Transverse colon (tissue), 4 donors: ENCODE measurements at regions of chr7 and their contacts with region 1.

Region 1: GRCh38 chr7:107743567-107744344 is at the start of gene CBLL1:
- DNase-seq: peak; percentile 97
- H3K4me3 ChIP-seq: peak within 1 kb of the TSS; percentile 59 to 84 (median 73)
- H3K27ac ChIP-seq: peak within 1 kb of the TSS; percentile 93 to 96 (median 94)
- H3K4me1 ChIP-seq: peaks cover 19 to 49% (median 30%) of the 10 kb centered on the region in 4 donors
- H3K27me3 ChIP-seq: no peaks in the 10 kb centered on the region
- CTCF ChIP-seq: peak; percentile 65 to 83 (median 71)
- EP300 ChIP-seq: no peak
- POLR2A ChIP-seq: peak; percentile 68
- total RNA-seq, gene CBLL1: 30.6 to 53.9 (median 38.8) TPM

Region 2: GRCh38 chr7:107180378-107180777 is 563.4 kb before region 1 on chr7:
- in situ Hi-C with region 1: loop called in 1 of 4 experiments (anchors 25 kb)
- intact Hi-C with region 1: no loop called
- DNase-seq: peak; percentile 56
- H3K4me3 ChIP-seq: no peak overlapping the region
- H3K27ac ChIP-seq: peak overlapping the region; percentile 5 to 48 (median 36)
- H3K4me1 ChIP-seq: peaks cover 12 to 38% (median 23%) of the 10 kb centered on the region in 4 donors
- H3K27me3 ChIP-seq: no peaks in the 10 kb centered on the region
- CTCF ChIP-seq: no peak
- EP300 ChIP-seq: no peak
- POLR2A ChIP-seq: no peak

Region 3: DNA sequence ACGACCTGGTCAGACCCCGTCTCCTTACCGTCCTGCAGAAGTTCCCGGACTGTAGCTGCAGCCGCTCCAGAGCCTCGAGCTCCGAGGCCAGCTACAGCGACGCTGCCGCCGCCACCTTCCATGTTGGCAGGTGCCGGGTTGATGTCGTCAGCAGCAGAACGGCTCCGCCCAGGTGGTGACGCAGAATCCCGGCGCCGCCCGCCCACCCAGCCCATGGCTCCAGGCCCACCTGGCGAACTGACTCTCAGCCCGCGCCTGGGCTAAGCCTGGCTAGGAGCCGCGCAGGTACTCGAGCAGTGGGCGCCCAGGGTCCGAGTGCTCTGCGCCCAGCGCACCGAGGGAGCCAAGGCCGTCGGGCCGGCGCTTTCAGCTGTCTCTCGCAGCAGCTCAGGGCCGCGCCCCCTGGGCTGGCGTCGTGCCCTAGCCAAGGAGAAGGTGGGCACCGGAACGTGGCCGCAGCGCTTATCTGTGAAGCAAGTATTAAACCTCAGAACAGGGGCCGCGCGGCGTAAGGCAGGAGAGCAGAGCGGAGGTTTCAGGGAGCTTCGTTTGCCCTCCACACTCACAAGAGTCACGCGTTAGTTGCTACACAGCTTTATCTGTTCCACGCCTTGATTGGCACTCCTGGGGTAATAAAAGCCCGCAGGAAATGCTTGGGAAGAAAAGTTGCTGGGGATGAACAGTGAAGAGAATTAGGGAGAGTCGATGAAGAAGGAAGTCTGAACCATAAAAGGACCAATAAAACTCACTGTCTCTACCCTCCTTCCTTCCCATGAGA is 179.8 kb before region 1 on chr7 and contains the starts of genes COG5 and DUS4L:
- in situ Hi-C with region 1: loop called in 2 of 4 experiments (anchors 25 kb)
- intact Hi-C with region 1: no loop called
- DNase-seq: peak; percentile 88
- H3K4me3 ChIP-seq: peak within 1 kb of the TSS; percentile 78 to 94 (median 85)
- H3K27ac ChIP-seq: peak within 1 kb of the TSS; percentile 95 to 99 (median 98)
- H3K4me1 ChIP-seq: peaks cover 19 to 48% (median 29%) of the 10 kb centered on the region in 4 donors
- H3K27me3 ChIP-seq: no peaks in the 10 kb centered on the region
- CTCF ChIP-seq: no peak
- EP300 ChIP-seq: no peak
- POLR2A ChIP-seq: peak; percentile 72
- total RNA-seq, gene COG5: 15.7 to 48.2 (median 35.7) TPM
- total RNA-seq, gene DUS4L: 1.2 to 10.2 (median 4.4) TPM

Region 4: GRCh38 chr7:107728281-107728680 is 15.5 kb before region 1 on chr7:
- in situ Hi-C with region 1: no loop called
- intact Hi-C with region 1: no loop called
- DNase-seq: no peak
- H3K4me3 ChIP-seq: no peak overlapping the region
- H3K27ac ChIP-seq: no peak overlapping the region
- H3K4me1 ChIP-seq: no peaks in the 10 kb centered on the region
- H3K27me3 ChIP-seq: peaks cover 12% of the 10 kb centered on the region
- CTCF ChIP-seq: no peak
- EP300 ChIP-seq: no peak
- POLR2A ChIP-seq: no peak

Region 5: DNA sequence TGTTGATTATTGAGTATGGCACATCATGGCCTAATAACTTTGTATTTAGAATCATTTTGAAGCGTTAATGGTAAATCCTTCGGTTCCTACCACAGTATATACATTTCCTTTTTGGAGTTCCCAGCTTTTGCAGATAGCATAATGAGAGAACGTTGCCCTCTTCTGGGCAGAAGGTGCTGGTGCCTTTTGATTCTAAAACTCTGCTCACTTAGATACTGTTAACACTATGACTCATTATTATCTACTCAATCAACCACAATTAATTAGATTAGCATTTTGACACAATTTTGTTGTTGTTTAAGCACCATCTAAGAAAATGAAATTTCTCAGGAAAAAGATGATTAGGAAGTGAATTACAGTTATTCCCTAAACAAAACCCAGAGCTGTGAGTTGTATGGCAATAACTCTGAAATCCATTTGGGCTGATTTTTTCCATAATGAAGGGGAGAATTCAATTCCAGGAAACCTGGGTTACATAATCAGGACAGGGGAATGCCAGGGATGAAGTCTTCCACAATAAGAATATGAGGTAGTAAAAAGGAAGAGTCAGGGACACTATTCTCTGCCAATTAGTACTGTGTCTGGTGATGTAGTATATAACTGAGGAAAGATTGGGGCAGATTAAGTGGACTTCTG is 135.8 kb after region 1 on chr7:
- in situ Hi-C with region 1: loop called (anchors 5 to 25 kb)
- intact Hi-C with region 1: loop called (anchors 1 kb)
- DNase-seq: peak; percentile 46
- H3K4me3 ChIP-seq: no peak overlapping the region
- H3K27ac ChIP-seq: no peak overlapping the region
- H3K4me1 ChIP-seq: peaks cover 0 to 12% (median 2%) of the 10 kb centered on the region in 4 donors
- H3K27me3 ChIP-seq: no peaks in the 10 kb centered on the region
- CTCF ChIP-seq: peak; percentile 71 to 83 (median 74)
- EP300 ChIP-seq: no peak
- POLR2A ChIP-seq: no peak

Region 6: DNA sequence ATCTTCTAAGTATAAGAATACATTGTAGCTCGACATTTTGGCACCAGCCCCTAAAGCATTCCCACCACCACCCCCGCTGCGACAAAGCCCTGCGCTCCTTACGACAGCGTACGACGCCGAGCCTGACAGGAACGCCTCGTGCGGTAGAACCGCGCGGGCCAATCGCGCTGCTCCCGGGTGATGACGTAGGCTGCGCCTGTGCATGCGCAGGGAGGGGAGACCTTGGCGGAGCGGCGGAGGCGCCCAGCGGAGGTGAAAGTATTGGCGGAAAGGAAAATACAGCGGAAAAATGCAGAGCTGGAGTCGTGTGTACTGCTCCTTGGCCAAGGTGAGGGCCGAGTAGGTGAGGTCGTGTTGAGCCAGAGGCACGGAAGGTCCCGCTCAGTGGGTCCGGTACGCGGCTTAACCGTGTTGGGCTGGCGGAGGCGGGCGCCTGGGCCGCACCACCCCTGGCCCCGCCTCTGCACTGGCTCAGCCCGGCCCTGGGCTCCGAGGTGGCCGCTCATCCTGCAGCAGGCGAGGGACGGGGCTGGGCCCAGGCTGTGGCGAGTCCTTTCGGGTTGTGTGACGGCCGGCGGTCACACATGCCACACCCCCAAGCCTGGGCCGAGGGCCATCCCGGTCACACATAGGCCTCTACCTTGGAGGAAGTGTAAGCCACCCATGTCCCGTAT is 147.3 kb after region 1 on chr7 and contains the start of gene DLD:
- in situ Hi-C with region 1: loop called in 1 of 4 experiments (anchors 25 kb)
- intact Hi-C with region 1: no loop called
- DNase-seq: peak; percentile 96
- H3K4me3 ChIP-seq: peak within 1 kb of the TSS; percentile 55 to 75 (median 66)
- H3K27ac ChIP-seq: peak within 1 kb of the TSS; percentile 94 to 96 (median 94)
- H3K4me1 ChIP-seq: peaks cover 14 to 30% (median 28%) of the 10 kb centered on the region in 4 donors
- H3K27me3 ChIP-seq: no peaks in the 10 kb centered on the region
- CTCF ChIP-seq: peak in 1 of 5 experiments; percentile 15
- EP300 ChIP-seq: no peak
- POLR2A ChIP-seq: peak; percentile 94
- total RNA-seq, gene DLD: 46.0 to 131 (median 126) TPM

Region 7: DNA sequence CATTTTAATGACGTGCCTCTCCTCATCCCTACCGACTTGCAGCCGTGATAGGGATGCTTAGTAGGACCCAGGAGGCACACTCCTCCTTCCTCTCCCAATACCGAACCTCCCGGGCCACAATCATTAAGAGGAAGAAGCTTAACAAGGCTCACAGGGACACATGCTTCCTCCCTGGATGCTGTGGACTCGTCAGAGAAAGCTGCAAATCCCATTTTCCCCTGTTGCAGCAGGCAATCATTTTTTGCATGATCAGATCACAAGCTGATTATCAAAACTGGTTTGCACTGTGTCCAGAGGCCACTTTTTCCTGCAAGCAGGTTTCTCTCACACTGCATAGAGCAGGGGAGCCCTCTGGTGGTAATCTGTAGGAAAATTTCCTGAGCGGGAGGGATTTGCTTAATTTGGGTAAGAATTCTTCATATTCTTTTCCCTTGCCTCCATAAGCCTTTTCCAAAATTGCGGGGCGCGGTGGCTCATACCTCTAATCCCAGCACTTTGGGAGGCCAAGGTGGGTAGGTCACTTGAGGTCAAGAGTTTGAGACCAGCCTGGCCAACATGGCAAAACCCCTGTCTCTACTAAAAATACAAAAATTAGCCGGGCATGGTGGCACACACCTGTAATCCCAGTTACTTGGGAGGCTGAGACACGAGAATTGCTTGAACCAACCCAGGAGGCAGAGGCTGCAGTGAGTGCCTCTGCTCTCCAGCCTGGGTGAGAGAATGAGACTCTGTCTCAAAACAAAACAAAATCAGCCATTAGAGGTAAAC is 402.5 kb after region 1 on chr7:
- in situ Hi-C with region 1: loop called in 2 of 4 experiments (anchors 25 kb)
- intact Hi-C with region 1: no loop called
- DNase-seq: peak; percentile 63
- H3K4me3 ChIP-seq: no peak overlapping the region
- H3K27ac ChIP-seq: no peak overlapping the region
- H3K4me1 ChIP-seq: peaks cover 0 to 6% (median 2%) of the 10 kb centered on the region in 4 donors
- H3K27me3 ChIP-seq: no peaks in the 10 kb centered on the region
- CTCF ChIP-seq: peak; percentile 85 to 89 (median 87)
- EP300 ChIP-seq: no peak
- POLR2A ChIP-seq: no peak

Region 8: GRCh38 chr7:108156897-108157602 is 413.3 kb after region 1 on chr7:
- in situ Hi-C with region 1: no loop called
- intact Hi-C with region 1: no loop called
- DNase-seq: no peak
- H3K4me3 ChIP-seq: no peak overlapping the region
- H3K27ac ChIP-seq: no peak overlapping the region
- H3K4me1 ChIP-seq: no peaks in the 10 kb centered on the region
- H3K27me3 ChIP-seq: no peaks in the 10 kb centered on the region
- CTCF ChIP-seq: no peak
- EP300 ChIP-seq: no peak
- POLR2A ChIP-seq: no peak